HCT116 (cell line): ENCODE measurements at regions of chr22 and their contacts with region 1.

Region 1: DNA sequence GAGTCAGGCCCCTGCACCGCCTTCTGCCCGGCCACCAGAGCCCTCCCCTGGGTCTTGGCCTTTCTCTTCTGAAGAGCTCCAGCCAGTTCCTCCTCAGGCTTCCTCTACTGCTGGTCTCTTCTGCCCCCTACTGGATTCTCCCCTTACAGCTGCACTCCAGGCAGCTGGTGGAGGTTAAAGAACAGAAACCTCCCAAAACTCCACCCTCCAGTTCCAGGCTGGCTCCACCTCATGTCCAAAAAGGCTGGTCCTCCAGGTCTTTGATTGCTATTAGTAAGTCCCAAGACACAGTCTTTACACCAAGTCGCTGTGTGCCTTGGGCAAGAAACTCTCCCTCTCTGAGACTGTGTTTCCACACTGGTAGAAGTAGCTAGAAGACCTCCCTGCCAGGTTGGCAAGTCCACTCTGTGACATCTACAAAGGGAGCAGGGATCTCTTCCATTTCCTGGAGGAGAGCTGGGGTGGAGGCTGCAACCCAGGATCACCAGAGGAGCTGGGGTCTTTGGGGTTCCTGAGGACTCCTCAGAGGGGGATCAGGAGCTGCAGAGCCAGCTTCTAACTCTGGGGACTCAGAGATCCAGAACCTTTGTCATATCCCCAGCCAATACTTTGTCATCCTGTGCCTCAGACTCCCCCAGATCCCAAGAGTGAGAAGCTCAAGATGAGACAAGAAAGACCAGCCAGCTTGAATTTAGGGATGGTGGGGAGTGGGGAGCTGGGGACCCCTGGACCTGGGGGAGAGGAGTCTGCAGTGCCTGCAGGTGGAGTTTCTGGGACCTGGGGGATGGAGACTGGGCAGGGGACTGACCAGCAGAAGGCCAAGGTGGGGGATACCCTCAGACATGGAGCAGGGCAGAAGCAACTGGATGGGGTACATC is 3.4 kb upstream of the IGLL5 start:
- DNase-seq: peak; percentile 66
- ATAC-seq: peak; percentile 96
- H3K4me3 ChIP-seq: no peak overlapping the region
- H3K27ac ChIP-seq: no peak overlapping the region
- H3K4me1 ChIP-seq: no peaks in the 10 kb centered on the region
- H3K27me3 ChIP-seq: no peaks in the 10 kb centered on the region
- CTCF ChIP-seq: peak; percentile 80 to 82 (median 81)
- POLR2A ChIP-seq: no peak
- RAD21 ChIP-seq: peak; percentile 89

Region 2: GRCh38 chr22:22422629-22423112 is 461.6 kb before region 1 on chr22:
- CTCF ChIA-PET with region 1: interaction called, 10 read pairs
- POLR2A ChIA-PET with region 1: no interaction called
- RAD21 ChIA-PET with region 1: no interaction called
- intact Hi-C with region 1: no loop called
- DNase-seq: peak; percentile 56
- ATAC-seq: peak; percentile 92
- H3K4me3 ChIP-seq: no peak overlapping the region
- H3K27ac ChIP-seq: no peak overlapping the region
- H3K4me1 ChIP-seq: peaks cover 0 to 3% of the 10 kb centered on the region in 2 experiments; a peak in 1 of 4 replicates
- H3K27me3 ChIP-seq: peaks cover 56% of the 10 kb centered on the region
- CTCF ChIP-seq: peak; percentile 35 to 94 (median 86); a peak in 5 of 6 replicates
- POLR2A ChIP-seq: no peak
- RAD21 ChIP-seq: peak; percentile 30; the same call in 1 of the 2 replicates

Region 3: DNA sequence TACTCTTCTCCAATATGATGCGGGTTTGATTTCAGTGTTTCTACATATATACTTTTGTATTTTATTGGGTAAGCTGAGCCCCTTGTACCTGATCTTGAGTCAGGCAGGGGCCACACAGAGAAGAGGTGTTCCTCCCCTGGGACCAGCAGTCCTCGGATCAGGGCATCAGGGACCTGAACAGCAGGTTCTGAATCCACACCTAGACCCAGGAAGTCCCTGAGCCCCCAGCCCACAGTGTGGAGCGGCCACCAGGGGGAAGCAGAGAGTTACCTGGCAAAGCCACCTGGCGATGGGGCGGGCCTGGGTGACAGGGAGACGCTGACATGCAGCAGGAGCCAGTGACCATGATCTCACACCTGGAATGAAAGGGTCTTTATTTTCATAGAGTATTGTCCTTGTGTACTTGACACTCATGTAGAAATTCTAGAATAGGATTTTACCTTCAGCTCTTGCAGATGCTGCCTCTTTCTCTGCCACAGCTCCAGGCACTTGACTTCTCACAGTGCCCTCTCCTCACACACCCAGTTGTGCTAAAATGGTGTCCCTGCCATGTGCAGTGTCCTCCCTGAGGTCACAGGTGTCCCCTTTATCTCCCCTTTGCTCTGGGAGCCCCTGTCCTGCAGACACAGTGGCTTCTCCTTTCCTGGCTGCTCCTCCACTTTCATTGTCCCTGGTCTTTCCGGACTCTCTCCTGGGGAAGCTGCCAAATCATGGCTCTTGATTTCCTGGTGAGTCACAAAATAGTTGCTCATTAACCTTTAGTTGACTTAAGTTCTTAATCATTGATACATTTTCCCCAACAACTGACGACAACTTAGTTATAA is 191.3 kb before region 1 on chr22:
- CTCF ChIA-PET with region 1: interaction called, 13 read pairs
- POLR2A ChIA-PET with region 1: no interaction called
- RAD21 ChIA-PET with region 1: no interaction called
- intact Hi-C with region 1: no loop called
- DNase-seq: no peak
- ATAC-seq: peak; percentile 99
- H3K4me3 ChIP-seq: peak overlapping the region in 1 of 2 experiments; percentile 36; a peak in 2 of 4 replicates
- H3K27ac ChIP-seq: no peak overlapping the region
- H3K4me1 ChIP-seq: peaks cover 10 to 24% of the 10 kb centered on the region in 2 experiments; a peak in 3 of 4 replicates
- H3K27me3 ChIP-seq: no peaks in the 10 kb centered on the region
- CTCF ChIP-seq: peak; percentile 69 to 98 (median 96); a peak in 5 of 6 replicates
- POLR2A ChIP-seq: no peak
- RAD21 ChIP-seq: peak; percentile 42

Region 4: DNA sequence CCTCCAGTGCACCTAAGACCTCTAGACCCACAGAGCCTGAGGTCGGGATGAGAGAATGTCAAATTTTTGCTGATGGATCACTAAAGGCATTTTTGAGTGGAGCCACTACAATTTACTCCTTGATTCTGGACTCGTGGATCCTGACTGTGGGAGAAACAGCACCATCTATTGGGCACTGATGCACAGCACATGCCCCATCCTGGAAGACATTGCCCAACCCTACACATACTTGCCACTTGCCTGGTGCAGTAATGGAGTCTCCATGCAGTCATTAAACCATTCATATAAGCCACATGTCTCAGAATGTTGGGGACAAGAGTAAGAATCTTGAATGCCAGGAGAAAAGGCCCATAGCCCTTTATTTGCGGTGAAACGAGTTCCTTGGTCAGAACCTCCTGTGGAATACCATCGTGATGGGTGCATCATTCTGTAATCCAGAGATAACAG is 135.9 kb before region 1 on chr22:
- CTCF ChIA-PET with region 1: interaction called, 63 read pairs
- POLR2A ChIA-PET with region 1: no interaction called
- RAD21 ChIA-PET with region 1: interaction called in 1 of 2 experiments, 4 read pairs
- intact Hi-C with region 1: loop called (anchors 5 kb)
- DNase-seq: no peak
- ATAC-seq: peak; percentile 90
- H3K4me3 ChIP-seq: no peak overlapping the region
- H3K27ac ChIP-seq: no peak overlapping the region
- H3K4me1 ChIP-seq: peaks cover 0 to 4% of the 10 kb centered on the region in 2 experiments; a peak in 1 of 4 replicates
- H3K27me3 ChIP-seq: peaks cover 9% of the 10 kb centered on the region; the same call in 1 of the 2 replicates
- CTCF ChIP-seq: peak; percentile 63 to 79 (median 78); a peak in 5 of 6 replicates
- POLR2A ChIP-seq: no peak
- RAD21 ChIP-seq: peak; percentile 47

Region 5: GRCh38 chr22:22770280-22770871 is 113.9 kb before region 1 on chr22:
- CTCF ChIA-PET with region 1: interaction called, 65 read pairs
- POLR2A ChIA-PET with region 1: no interaction called
- RAD21 ChIA-PET with region 1: interaction called, 3 to 8 read pairs
- intact Hi-C with region 1: loop called (anchors 5 kb)
- DNase-seq: no peak
- ATAC-seq: peak; percentile 96
- H3K4me3 ChIP-seq: no peak overlapping the region
- H3K27ac ChIP-seq: no peak overlapping the region
- H3K4me1 ChIP-seq: no peaks in the 10 kb centered on the region
- H3K27me3 ChIP-seq: peaks cover 8% of the 10 kb centered on the region; the same call in 1 of the 2 replicates
- CTCF ChIP-seq: peak; percentile 59 to 94 (median 90); a peak in 5 of 6 replicates
- POLR2A ChIP-seq: no peak
- RAD21 ChIP-seq: peak; percentile 38; the same call in 1 of the 2 replicates

Region 6: GRCh38 chr22:22810018-22810427 is 74.2 kb before region 1 on chr22:
- CTCF ChIA-PET with region 1: interaction called, 55 read pairs
- POLR2A ChIA-PET with region 1: no interaction called
- RAD21 ChIA-PET with region 1: interaction called, 8 to 13 read pairs
- intact Hi-C with region 1: loop called (anchors 2 kb)
- DNase-seq: peak; percentile 36
- ATAC-seq: peak; percentile 100
- H3K4me3 ChIP-seq: no peak overlapping the region
- H3K27ac ChIP-seq: no peak overlapping the region
- H3K4me1 ChIP-seq: no peaks in the 10 kb centered on the region
- H3K27me3 ChIP-seq: no peaks in the 10 kb centered on the region
- CTCF ChIP-seq: peak; percentile 54 to 98 (median 97); a peak in 5 of 6 replicates
- POLR2A ChIP-seq: no peak
- RAD21 ChIP-seq: peak; percentile 66

Region 7: DNA sequence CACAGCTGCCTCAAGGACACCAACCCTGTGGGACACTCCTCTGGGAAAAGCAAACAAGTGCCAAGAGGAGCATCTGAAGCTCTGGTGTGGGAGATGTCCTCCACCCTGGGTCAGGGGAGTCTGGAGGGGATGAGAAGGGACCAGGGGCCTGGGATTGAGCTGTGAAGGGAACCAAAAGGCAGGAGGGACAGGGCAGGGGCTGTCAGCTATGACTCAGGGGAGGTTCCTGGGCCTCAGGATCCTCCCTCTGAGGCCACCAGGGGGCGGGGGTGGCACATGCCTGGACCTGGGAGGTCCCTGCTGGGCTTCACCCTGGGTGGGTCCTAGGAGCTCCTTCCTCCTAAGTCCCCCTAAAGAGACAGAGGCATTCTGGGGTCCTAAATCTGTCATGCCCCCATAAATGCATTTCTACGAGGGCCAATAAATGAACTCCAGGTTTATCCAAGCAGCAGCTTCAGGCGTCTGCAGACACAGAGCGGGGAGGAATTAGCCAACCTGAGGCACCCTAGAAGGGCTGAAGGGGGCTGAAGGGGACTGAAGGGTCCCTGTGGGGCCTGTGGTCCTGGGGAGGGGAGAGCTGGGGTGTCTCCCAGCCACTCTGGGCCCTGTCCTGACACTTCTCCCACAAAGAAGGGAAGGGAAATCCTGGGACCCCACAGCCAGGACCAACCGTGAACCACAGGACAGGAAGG is 28.5 kb before region 1 on chr22:
- CTCF ChIA-PET with region 1: interaction called, 31 read pairs
- POLR2A ChIA-PET with region 1: no interaction called
- RAD21 ChIA-PET with region 1: interaction called in 1 of 2 experiments, 6 read pairs
- intact Hi-C with region 1: no loop called
- DNase-seq: no peak
- ATAC-seq: peak; percentile 99
- H3K4me3 ChIP-seq: no peak overlapping the region
- H3K27ac ChIP-seq: no peak overlapping the region; the same call in 1 of the 2 replicates
- H3K4me1 ChIP-seq: peaks cover 3 to 5% of the 10 kb centered on the region in 2 experiments; a peak in 1 of 4 replicates
- H3K27me3 ChIP-seq: peaks cover 39% of the 10 kb centered on the region
- CTCF ChIP-seq: peak; percentile 34 to 80 (median 63); a peak in 5 of 6 replicates
- POLR2A ChIP-seq: no peak
- RAD21 ChIP-seq: peak; percentile 19; the same call in 1 of the 2 replicates

Region 8: DNA sequence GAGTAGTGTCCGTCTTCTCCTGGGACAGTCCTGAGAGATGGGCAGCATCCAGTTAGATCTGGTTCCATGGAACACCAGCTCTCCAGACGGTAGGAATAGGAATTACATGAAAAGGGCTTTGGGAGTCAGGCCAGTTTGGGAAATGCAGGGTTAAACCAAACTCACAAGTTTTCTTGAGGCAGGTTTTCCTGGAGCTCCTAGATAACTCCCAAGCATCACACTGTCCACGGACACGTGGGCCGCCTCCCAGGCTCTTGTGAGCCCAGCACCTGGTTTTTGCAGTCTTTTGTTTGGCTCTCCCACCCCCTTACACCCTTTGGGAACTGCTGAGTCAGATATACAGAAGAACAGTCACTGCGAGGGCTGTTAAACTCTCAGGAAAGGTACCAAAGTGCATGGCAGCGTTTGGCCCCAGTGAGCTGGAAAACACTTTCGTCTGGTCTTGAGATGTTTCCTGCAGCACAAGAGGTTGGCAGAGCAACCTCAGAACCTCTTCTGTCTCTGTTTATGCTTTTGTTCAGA is 386.0 kb after region 1 on chr22:
- CTCF ChIA-PET with region 1: no interaction called
- POLR2A ChIA-PET with region 1: no interaction called
- RAD21 ChIA-PET with region 1: no interaction called
- intact Hi-C with region 1: no loop called
- DNase-seq: no peak
- ATAC-seq: no peak
- H3K4me3 ChIP-seq: no peak overlapping the region
- H3K27ac ChIP-seq: no peak overlapping the region
- H3K4me1 ChIP-seq: no peaks in the 10 kb centered on the region
- H3K27me3 ChIP-seq: no peaks in the 10 kb centered on the region
- CTCF ChIP-seq: no peak
- POLR2A ChIP-seq: no peak
- RAD21 ChIP-seq: no peak